Endothelial cell of umbilical vein (primary cell): ENCODE measurements at regions of chr6 and their contacts with region 1.

Region 1: DNA sequence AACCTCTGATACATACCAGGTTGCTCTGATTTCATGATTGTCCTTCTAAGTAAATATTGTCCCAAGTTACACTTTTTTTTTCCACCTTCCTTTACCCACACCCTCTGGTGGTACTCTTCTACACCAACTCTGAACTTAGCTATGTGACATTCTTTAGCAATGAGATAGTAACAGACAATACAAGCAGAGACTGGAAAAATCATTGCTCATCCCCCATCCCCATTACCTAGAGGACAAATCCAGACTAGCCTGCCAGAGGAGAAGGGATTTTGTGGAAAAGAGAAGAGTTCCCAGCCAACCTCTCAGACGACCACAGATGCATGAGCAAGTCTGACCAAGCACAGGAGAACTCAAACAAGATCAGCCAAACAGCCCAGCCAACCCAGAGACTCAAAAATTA is 32.8 kb upstream of the TFAP2B start:
- DNase-seq: no peak
- H3K4me3 ChIP-seq: no peak overlapping the region
- H3K27ac ChIP-seq: no peak overlapping the region
- H3K4me1 ChIP-seq: no peaks in the 10 kb centered on the region
- H3K27me3 ChIP-seq: no peaks in the 10 kb centered on the region
- CTCF ChIP-seq: no peak
- POLR2A ChIP-seq: no peak

Region 2: GRCh38 chr6:50143011-50143719 is 642.8 kb before region 1 on chr6:
- CTCF ChIA-PET with region 1: no interaction called
- POLR2A ChIA-PET with region 1: no interaction called
- dilution Hi-C with region 1: no loop called
- intact Hi-C with region 1: loop called (anchors 5 kb)
- DNase-seq: no peak
- H3K4me3 ChIP-seq: no peak overlapping the region
- H3K27ac ChIP-seq: no peak overlapping the region
- H3K4me1 ChIP-seq: no peaks in the 10 kb centered on the region
- H3K27me3 ChIP-seq: no peaks in the 10 kb centered on the region
- CTCF ChIP-seq: no peak
- POLR2A ChIP-seq: no peak

Region 3: GRCh38 chr6:50762798-50763197 is 23.1 kb before region 1 on chr6:
- CTCF ChIA-PET with region 1: no interaction called
- POLR2A ChIA-PET with region 1: no interaction called
- dilution Hi-C with region 1: no loop called
- intact Hi-C with region 1: no loop called
- DNase-seq: no peak
- H3K4me3 ChIP-seq: no peak overlapping the region
- H3K27ac ChIP-seq: no peak overlapping the region
- H3K4me1 ChIP-seq: no peaks in the 10 kb centered on the region
- H3K27me3 ChIP-seq: no peaks in the 10 kb centered on the region
- CTCF ChIP-seq: no peak
- POLR2A ChIP-seq: no peak

Region 4: GRCh38 chr6:51459958-51460357 is 674.0 kb after region 1 on chr6:
- CTCF ChIA-PET with region 1: no interaction called
- POLR2A ChIA-PET with region 1: no interaction called
- dilution Hi-C with region 1: no loop called
- intact Hi-C with region 1: no loop called
- DNase-seq: no peak
- H3K4me3 ChIP-seq: no peak overlapping the region
- H3K27ac ChIP-seq: no peak overlapping the region
- H3K4me1 ChIP-seq: no peaks in the 10 kb centered on the region
- H3K27me3 ChIP-seq: no peaks in the 10 kb centered on the region
- CTCF ChIP-seq: no peak
- POLR2A ChIP-seq: no peak